Ovary (tissue), 10 donors: ENCODE measurements at regions of chr7 and their contacts with region 1.

Region 1: GRCh38 chr7:66964411-66964810 is 31.0 kb downstream of the SBDS start:
- DNase-seq: peak in 2 of 5 donors; percentile 15 to 45
- H3K4me3 ChIP-seq: no peak overlapping the region
- H3K27ac ChIP-seq: no peak overlapping the region
- H3K4me1 ChIP-seq: no peaks in the 10 kb centered on the region
- H3K27me3 ChIP-seq: no peaks in the 10 kb centered on the region
- CTCF ChIP-seq: no peak
- EP300 ChIP-seq: no peak
- POLR2A ChIP-seq: no peak

Region 2: DNA sequence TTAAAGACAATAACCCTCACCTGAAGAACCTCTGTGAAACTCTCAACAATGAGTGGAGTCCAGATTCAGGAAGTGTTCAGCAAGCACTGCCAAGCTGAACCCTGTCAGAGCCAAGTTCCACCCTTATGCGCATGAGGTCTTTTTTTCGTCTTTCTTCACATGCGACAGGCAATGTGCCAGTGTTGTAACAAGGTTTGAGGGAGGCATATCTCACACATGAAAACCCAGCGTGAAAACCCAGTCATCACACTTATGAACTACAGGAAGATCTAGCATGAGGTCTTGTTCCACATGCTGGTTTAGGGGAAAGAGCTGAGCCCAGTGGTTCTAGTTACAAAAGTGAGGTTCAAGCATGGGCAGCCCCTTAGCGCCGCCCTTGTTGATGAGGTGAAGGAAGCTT is 174.2 kb before region 1 on chr7:
- intact Hi-C with region 1: no loop called
- DNase-seq: no peak
- H3K4me3 ChIP-seq: no peak overlapping the region
- H3K27ac ChIP-seq: no peak overlapping the region
- H3K4me1 ChIP-seq: no peaks in the 10 kb centered on the region
- H3K27me3 ChIP-seq: no peaks in the 10 kb centered on the region
- CTCF ChIP-seq: no peak
- EP300 ChIP-seq: no peak
- POLR2A ChIP-seq: no peak

Region 3: GRCh38 chr7:66859794-66860645 is 104.4 kb before region 1 on chr7:
- intact Hi-C with region 1: loop called in 1 of 4 experiments (anchors 10 kb)
- DNase-seq: no peak
- H3K4me3 ChIP-seq: no peak overlapping the region
- H3K27ac ChIP-seq: no peak overlapping the region
- H3K4me1 ChIP-seq: no peaks in the 10 kb centered on the region
- H3K27me3 ChIP-seq: no peaks in the 10 kb centered on the region
- CTCF ChIP-seq: no peak
- EP300 ChIP-seq: no peak
- POLR2A ChIP-seq: no peak